ENCODE measurements at regions of chr6 and their contacts with region 1.

Region 1: GRCh38 chr6:160766989-160767660 is 65.1 kb downstream of the PLG start:
- DNase-seq: no peak
- ATAC-seq: peak; percentile 99
- H3K4me3 ChIP-seq: peak overlapping the region; percentile 62
- H3K27ac ChIP-seq: peak overlapping the region; percentile 61
- H3K4me1 ChIP-seq: peaks cover 5% of the 10 kb centered on the region
- H3K27me3 ChIP-seq: no peaks in the 10 kb centered on the region
- CTCF ChIP-seq: peak; percentile 74 to 94 (median 86)
- EP300 ChIP-seq: no peak
- POLR2A ChIP-seq: peak; percentile 50; the same call in 1 of the 2 replicates
- RAD21 ChIP-seq: peak; percentile 82

Region 2: GRCh38 chr6:160520043-160520904 is 246.9 kb before region 1 on chr6:
- CTCF ChIA-PET with region 1: no interaction called
- POLR2A ChIA-PET with region 1: no interaction called
- RAD21 ChIA-PET with region 1: no interaction called
- SMC1A ChIA-PET with region 1: no interaction called
- in situ Hi-C with region 1: no loop called
- intact Hi-C with region 1: loop called (anchors 5 kb)
- DNase-seq: no peak
- ATAC-seq: peak; percentile 89
- H3K4me3 ChIP-seq: peak overlapping the region; percentile 69; the same call in 1 of the 2 replicates
- H3K27ac ChIP-seq: no peak overlapping the region
- H3K4me1 ChIP-seq: no peaks in the 10 kb centered on the region
- H3K27me3 ChIP-seq: no peaks in the 10 kb centered on the region
- CTCF ChIP-seq: peak in 1 of 3 experiments; percentile 92; a peak in 4 of 6 replicates
- EP300 ChIP-seq: no peak
- POLR2A ChIP-seq: no peak
- RAD21 ChIP-seq: peak; percentile 74

Region 3: DNA sequence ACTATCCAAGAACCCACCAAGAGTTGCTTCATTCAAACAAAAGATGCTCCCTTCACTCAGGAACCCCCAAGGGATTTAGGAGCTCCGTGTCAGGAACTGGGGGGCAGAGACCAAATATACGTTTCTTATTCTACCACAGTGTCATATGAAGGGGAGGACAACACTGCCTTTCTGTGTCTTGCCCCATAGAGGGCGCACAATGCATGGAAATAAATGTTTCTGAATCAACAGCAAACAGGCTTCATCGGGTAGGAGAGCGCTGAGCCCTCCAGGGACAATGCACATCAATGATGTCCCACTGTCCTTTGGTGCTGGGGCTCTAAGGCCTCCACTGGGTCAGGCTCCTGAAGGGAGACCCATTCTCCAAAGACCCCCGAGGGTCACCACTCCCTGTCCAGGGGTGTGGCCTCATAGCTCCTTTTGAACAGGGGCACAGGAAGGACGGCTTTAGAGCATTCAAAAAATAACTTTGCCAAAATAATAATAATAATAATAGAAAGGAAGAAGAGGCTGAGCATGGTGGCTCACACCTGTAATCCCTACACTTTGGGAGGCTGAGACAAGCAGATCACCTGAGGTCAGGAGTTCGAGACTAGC is 34.0 kb before region 1 on chr6:
- CTCF ChIA-PET with region 1: interaction called, 3 read pairs
- POLR2A ChIA-PET with region 1: no interaction called
- RAD21 ChIA-PET with region 1: no interaction called
- SMC1A ChIA-PET with region 1: interaction called, 5 read pairs
- in situ Hi-C with region 1: no loop called
- intact Hi-C with region 1: loop called (anchors 1 kb)
- DNase-seq: no peak
- ATAC-seq: peak; percentile 89
- H3K4me3 ChIP-seq: no peak overlapping the region
- H3K27ac ChIP-seq: no peak overlapping the region
- H3K4me1 ChIP-seq: peaks cover 26% of the 10 kb centered on the region
- H3K27me3 ChIP-seq: no peaks in the 10 kb centered on the region
- CTCF ChIP-seq: peak; percentile 69 to 87 (median 72)
- EP300 ChIP-seq: no peak
- POLR2A ChIP-seq: no peak
- RAD21 ChIP-seq: peak; percentile 91

Region 4: DNA sequence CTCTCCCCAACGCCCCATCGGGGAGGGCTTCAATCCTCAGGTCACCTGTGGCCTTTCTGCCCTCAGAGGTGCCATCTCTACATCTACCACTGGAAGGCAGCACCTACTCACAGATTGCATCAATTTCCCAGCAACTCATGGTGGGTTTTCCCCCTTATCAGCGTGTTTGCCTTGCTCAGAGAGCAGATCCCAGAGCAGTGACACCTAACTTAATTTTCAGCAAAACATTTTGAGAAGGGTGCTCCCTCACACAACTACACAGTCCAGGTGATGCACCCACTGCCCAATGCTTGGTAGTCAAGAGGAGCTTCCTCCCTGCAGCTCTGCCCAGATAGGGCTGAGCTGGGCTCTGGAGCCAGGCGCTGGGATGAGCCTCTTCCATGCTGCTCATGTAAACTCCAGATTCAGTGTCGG is 16.8 kb before region 1 on chr6:
- CTCF ChIA-PET with region 1: interaction called, 3 read pairs
- POLR2A ChIA-PET with region 1: no interaction called
- RAD21 ChIA-PET with region 1: no interaction called
- SMC1A ChIA-PET with region 1: no interaction called
- in situ Hi-C with region 1: no loop called
- intact Hi-C with region 1: loop called (anchors 2 kb)
- DNase-seq: peak; percentile 39
- ATAC-seq: peak; percentile 80
- H3K4me3 ChIP-seq: no peak overlapping the region
- H3K27ac ChIP-seq: no peak overlapping the region
- H3K4me1 ChIP-seq: no peaks in the 10 kb centered on the region
- H3K27me3 ChIP-seq: no peaks in the 10 kb centered on the region
- CTCF ChIP-seq: peak; percentile 78 to 95 (median 84); a peak in 5 of 6 replicates
- EP300 ChIP-seq: no peak
- POLR2A ChIP-seq: no peak
- RAD21 ChIP-seq: peak; percentile 95

Measured in GM12878 (cell line).